ENCODE measurements at regions of chr10 and their contacts with region 1.

Region 1: DNA sequence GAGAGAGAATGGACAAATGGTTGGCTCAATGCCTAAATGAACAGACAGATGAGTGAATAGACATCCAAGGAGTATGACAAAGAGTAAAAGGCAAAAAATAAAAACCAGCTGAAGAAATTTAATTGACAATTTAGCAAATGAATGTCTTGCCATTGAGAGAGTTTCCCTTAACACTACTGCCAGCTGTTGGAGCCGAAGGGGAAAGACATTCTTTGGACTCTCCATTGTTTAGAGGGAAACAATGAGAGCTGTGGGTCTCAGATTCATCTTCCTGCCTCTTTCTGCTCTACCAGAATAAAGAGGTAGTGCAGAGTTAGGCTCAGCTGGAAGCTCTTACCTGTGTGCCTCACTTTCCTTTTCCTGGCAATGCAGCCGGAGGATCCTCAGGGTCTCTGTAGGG is 7.9 kb downstream of the SYCE1 start:
- DNase-seq: no peak
- ATAC-seq: no peak
- H3K4me3 ChIP-seq: no peak overlapping the region
- H3K27ac ChIP-seq: no peak overlapping the region
- H3K4me1 ChIP-seq: no peaks in the 10 kb centered on the region
- H3K27me3 ChIP-seq: peaks cover 0 to 9% of the 10 kb centered on the region in 2 experiments; a peak in 1 of 5 replicates
- CTCF ChIP-seq: 0 out of 6 replicates have a peak, but pooled peaks of 1 of the 3 experiments have one; percentile 11
- EP300 ChIP-seq: no peak
- POLR2A ChIP-seq: no peak
- RAD21 ChIP-seq: 0 out of 4 replicates have a peak, but pooled peaks of 1 of the 2 experiments have one; percentile 18

Region 2: GRCh38 chr10:133438711-133439273 is 118.7 kb before region 1 on chr10:
- CTCF ChIA-PET with region 1: no interaction called
- POLR2A ChIA-PET with region 1: interaction called, 3 read pairs
- in situ Hi-C with region 1: loop called (anchors 5 kb)
- intact Hi-C with region 1: loop called (anchors 5 kb)
- DNase-seq: peak; percentile 51 to 62 (median 56)
- ATAC-seq: peak; percentile 86
- H3K4me3 ChIP-seq: no peak overlapping the region
- H3K27ac ChIP-seq: no peak overlapping the region
- H3K4me1 ChIP-seq: peaks cover 0 to 3% of the 10 kb centered on the region in 2 experiments; a peak in 1 of 5 replicates
- H3K27me3 ChIP-seq: peaks cover 0 to 7% of the 10 kb centered on the region in 2 experiments; a peak in 1 of 5 replicates
- CTCF ChIP-seq: peak; percentile 58 to 73 (median 72)
- EP300 ChIP-seq: no peak
- POLR2A ChIP-seq: no peak
- RAD21 ChIP-seq: peak in 1 of 2 experiments; percentile 44; a peak in 2 of 4 replicates

Region 3: DNA sequence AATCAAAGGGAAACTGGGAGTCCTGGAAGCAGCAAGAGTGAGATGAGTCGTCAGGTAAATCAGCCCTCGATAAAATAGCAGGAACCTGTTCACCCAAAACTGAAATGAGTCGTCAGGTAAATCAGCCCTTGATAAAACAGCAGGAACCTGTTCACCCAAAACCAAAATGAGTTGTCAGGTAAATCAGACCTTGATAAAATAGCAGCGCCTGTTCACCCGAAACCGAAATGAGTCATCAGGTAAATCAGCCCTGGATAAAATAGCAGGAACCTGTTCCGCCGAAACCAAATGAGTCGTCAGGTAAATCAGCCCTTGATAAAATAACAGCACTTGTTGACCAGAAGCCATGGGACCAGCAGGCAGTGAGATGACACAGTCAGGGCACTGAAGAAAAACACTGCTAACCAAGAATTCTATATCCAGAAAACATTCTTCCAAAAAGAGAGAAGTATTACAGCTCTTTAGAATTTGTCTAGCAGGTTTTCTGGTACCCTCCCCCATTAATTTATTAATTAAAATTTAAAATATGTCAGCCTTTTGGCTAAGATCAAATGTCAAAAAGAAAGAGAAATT is 33.8 kb before region 1 on chr10:
- CTCF ChIA-PET with region 1: no interaction called
- POLR2A ChIA-PET with region 1: no interaction called
- in situ Hi-C with region 1: no loop called
- intact Hi-C with region 1: no loop called
- DNase-seq: no peak
- ATAC-seq: no peak
- H3K4me3 ChIP-seq: no peak overlapping the region
- H3K27ac ChIP-seq: no peak overlapping the region
- H3K4me1 ChIP-seq: peaks cover 0 to 14% of the 10 kb centered on the region in 2 experiments; a peak in 3 of 5 replicates
- H3K27me3 ChIP-seq: peaks cover 8 to 31% of the 10 kb centered on the region in 2 experiments; a peak in 4 of 5 replicates
- CTCF ChIP-seq: no peak
- EP300 ChIP-seq: no peak
- POLR2A ChIP-seq: no peak
- RAD21 ChIP-seq: no peak